SK-N-SH (cell line): ENCODE measurements at regions of chrX and their contacts with region 1.

Region 1: DNA sequence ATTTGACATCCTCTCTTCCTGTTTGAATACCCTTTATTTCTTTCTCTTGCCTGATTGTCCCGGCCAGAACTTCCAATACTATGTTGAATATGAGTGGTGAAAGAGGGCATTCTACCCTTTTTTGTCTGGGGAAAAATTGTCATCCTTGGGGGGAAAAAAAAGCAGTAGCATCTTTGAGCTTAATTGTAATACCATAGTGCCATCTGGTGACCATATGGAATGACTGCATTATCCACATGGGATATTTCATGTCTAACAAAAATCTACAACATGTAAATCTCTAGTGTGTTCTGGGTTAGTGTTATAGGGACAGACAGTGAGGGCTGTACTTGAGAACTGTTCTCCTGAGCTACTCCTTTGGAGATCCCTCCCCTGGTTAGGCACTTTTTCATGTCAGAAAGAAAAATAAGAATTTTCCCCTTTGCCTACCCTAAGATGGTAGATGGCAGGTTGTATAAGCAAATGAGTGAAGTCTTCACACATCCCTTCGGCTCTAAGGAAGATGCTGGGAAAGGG is 26.0 kb downstream of the CAPN6 start:
- DNase-seq: peak; percentile 50
- H3K4me3 ChIP-seq: no peak overlapping the region
- H3K27ac ChIP-seq: no peak overlapping the region
- H3K4me1 ChIP-seq: no peaks in the 10 kb centered on the region
- H3K27me3 ChIP-seq: peaks cover 29% of the 10 kb centered on the region
- CTCF ChIP-seq: peak; percentile 75
- EP300 ChIP-seq: no peak
- RAD21 ChIP-seq: peak; percentile 81

Region 2: DNA sequence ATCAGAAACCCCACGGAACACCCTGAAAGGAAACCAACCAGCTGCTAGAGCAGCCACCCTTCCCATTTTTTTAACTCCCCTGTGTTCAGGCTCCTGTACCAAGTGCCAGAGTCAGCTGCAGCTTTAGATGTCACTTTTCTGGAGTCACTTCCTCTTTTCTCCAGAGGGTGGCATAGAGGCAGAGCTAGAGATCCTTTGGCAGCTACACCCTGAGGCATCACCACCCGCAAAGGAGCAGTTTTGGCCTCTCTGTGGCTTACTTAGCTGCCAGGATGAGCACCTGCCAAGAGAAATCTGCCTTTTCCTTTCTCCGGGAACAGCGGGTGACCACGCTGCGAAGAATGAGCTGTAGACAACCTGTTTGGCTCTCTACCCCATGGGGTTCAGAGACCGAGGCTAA is 390.7 kb before region 1 on chrX:
- CTCF ChIA-PET with region 1: interaction called, 10 read pairs
- POLR2A ChIA-PET with region 1: no interaction called
- DNase-seq: peak; percentile 20
- H3K4me3 ChIP-seq: no peak overlapping the region
- H3K27ac ChIP-seq: no peak overlapping the region
- H3K4me1 ChIP-seq: no peaks in the 10 kb centered on the region
- H3K27me3 ChIP-seq: no peaks in the 10 kb centered on the region
- CTCF ChIP-seq: peak; percentile 37
- EP300 ChIP-seq: no peak
- RAD21 ChIP-seq: peak; percentile 48

Region 3: GRCh38 chrX:111071542-111072277 is 172.6 kb before region 1 on chrX:
- CTCF ChIA-PET with region 1: no interaction called
- POLR2A ChIA-PET with region 1: no interaction called
- DNase-seq: no peak
- H3K4me3 ChIP-seq: no peak overlapping the region
- H3K27ac ChIP-seq: no peak overlapping the region
- H3K4me1 ChIP-seq: no peaks in the 10 kb centered on the region; a peak in 1 of 4 replicates
- H3K27me3 ChIP-seq: no peaks in the 10 kb centered on the region; the same call in 1 of the 2 replicates
- CTCF ChIP-seq: no peak
- EP300 ChIP-seq: no peak
- RAD21 ChIP-seq: no peak

Region 4: DNA sequence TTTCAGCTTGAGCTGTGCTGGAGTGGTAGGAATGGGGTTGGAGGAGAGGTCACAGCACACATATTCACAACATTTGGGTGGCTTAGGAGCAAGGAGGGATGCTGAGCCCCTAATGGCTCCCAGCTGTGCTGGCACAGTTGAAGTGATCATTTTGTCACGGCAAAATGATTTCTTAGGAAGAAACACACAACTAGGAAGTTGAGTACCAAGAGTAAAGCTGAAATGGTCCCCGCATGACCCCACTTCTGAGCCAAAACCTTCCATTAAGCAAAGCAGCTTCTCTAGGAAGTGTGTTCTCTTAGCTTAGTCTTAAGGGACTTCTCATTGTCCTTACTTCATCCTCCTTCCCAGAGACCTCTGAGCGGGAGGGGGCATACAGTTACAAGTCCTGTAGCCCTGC is 13.4 kb after region 1 on chrX:
- CTCF ChIA-PET with region 1: interaction called, 22 read pairs
- POLR2A ChIA-PET with region 1: no interaction called
- DNase-seq: no peak
- H3K4me3 ChIP-seq: no peak overlapping the region
- H3K27ac ChIP-seq: no peak overlapping the region
- H3K4me1 ChIP-seq: no peaks in the 10 kb centered on the region
- H3K27me3 ChIP-seq: peaks cover 8% of the 10 kb centered on the region; the same call in 1 of the 2 replicates
- CTCF ChIP-seq: no peak
- EP300 ChIP-seq: no peak
- RAD21 ChIP-seq: no peak

Region 5: GRCh38 chrX:111467896-111468295 is 223.6 kb after region 1 on chrX:
- CTCF ChIA-PET with region 1: no interaction called
- POLR2A ChIA-PET with region 1: no interaction called
- DNase-seq: no peak
- H3K4me3 ChIP-seq: no peak overlapping the region
- H3K27ac ChIP-seq: peak overlapping the region in 1 of 2 experiments; percentile 36; a peak in 1 of 4 replicates
- H3K4me1 ChIP-seq: peaks cover 0 to 3% of the 10 kb centered on the region in 2 experiments; a peak in 1 of 4 replicates
- H3K27me3 ChIP-seq: no peaks in the 10 kb centered on the region
- CTCF ChIP-seq: no peak
- EP300 ChIP-seq: no peak
- RAD21 ChIP-seq: no peak